ENCODE measurements at regions of chr3 and their contacts with region 1.

Region 1: DNA sequence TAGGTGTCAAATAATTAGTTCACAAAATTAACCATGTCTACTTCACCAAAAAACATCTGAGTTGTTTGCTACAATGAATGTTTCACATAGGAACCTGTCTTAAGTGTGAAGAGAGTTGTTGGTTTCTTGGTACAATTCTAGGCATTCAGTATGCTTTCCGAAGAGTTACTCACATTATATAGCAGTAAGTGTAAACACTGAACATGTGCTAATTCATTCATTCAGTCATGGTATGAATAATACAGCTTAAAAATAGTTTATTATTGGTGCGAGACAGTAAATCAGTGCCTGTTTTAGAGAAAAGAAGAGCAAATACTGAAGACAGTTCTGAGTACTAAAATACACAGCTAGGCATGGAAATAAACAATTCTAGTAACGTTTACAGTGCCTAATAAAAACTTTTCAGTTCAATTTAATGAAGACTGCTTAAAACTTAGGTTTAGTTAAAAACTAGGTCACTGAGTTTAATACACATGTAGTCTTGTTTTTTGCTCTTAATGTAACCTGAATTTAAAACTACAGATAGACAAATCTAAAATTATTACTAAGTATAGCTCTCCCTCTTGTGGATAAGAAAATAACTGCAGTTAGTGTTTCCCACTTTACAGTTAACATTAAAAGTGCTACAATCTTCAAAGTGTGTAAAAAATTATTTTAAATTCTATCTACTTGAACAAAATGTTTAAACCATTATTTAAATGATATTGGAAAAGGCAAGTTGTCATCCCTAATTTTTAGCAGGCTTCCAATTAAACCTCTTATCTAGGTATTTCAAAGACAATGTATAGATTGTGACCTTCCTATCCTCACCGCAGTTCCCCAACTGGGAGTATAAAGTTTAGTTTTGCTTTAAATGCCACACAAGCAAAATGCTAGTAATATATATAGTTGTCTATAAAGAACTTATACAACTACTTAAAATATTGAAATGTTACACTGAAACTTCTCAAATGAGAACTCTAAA is 20.1 kb upstream of the ZCWPW2 start:
- DNase-seq: no peak
- ATAC-seq: peak; percentile 42; the same call in 1 of the 3 replicates
- H3K4me3 ChIP-seq: no peak overlapping the region
- H3K27ac ChIP-seq: no peak overlapping the region
- H3K4me1 ChIP-seq: peaks cover 30% of the 10 kb centered on the region
- H3K27me3 ChIP-seq: no peaks in the 10 kb centered on the region
- CTCF ChIP-seq: peak; percentile 48
- EP300 ChIP-seq: no peak
- POLR2A ChIP-seq: no peak
- RAD21 ChIP-seq: 0 out of 2 replicates have a peak, but pooled peaks have one; percentile 14

Region 2: DNA sequence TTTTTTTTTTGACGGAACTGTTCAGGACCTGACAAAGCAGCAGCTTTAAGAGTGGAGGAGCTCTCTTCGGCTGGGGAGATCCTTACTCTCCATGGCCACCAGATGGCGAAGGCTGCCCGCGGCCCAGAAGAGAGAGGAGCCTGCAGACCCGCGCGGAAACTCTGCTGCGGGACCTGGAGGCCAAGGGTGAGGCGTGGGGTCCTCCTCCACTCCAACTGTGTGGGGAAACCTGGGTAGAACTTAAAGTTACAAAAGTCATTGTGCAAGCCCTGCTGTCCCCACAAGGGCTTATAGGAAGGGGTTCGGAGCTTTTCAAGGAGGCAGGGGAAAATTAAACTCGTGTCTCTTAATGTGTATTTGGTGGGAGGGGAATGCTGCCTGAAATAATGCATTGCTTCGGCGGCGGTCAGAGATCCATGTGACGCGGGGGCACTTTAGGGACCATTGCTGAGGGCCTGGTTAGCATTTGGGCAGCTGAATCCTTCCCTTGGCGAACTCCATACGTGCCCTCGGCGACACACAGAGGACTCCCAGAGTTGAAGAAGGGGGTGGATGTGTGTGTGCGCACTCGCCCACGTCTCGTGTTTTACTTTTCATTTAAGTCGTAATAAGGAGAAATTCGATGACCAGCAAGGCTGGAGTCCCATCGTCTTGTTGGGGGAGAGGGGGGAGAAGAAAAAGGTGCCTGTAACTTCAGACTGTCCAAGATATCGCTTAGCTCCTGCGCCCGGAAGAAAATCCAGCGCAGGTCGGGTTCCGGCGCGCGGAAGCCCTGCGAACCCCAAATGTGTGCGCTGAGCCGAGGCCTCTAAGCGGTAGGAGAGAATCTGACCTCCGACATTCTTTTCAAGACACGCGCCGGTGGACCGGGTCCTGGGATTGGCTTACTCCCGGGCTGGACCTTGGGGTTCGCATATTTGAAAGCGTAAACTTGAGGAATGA is 616.1 kb before region 1 on chr3:
- CTCF ChIA-PET with region 1: interaction called, 7 read pairs
- POLR2A ChIA-PET with region 1: interaction called, 3 read pairs
- in situ Hi-C with region 1: loop called (anchors 5 kb)
- intact Hi-C with region 1: loop called (anchors 1 kb)
- DNase-seq: peak; percentile 55
- ATAC-seq: peak; percentile 94
- H3K4me3 ChIP-seq: peak overlapping the region; percentile 42 to 71 (median 58); a peak in 5 of 6 replicates
- H3K27ac ChIP-seq: no peak overlapping the region
- H3K4me1 ChIP-seq: peaks cover 34% of the 10 kb centered on the region
- H3K27me3 ChIP-seq: peaks cover 12 to 51% of the 10 kb centered on the region in 2 experiments
- CTCF ChIP-seq: peak; percentile 86
- EP300 ChIP-seq: no peak
- POLR2A ChIP-seq: no peak
- RAD21 ChIP-seq: peak; percentile 59; the same call in 1 of the 2 replicates

Region 3: DNA sequence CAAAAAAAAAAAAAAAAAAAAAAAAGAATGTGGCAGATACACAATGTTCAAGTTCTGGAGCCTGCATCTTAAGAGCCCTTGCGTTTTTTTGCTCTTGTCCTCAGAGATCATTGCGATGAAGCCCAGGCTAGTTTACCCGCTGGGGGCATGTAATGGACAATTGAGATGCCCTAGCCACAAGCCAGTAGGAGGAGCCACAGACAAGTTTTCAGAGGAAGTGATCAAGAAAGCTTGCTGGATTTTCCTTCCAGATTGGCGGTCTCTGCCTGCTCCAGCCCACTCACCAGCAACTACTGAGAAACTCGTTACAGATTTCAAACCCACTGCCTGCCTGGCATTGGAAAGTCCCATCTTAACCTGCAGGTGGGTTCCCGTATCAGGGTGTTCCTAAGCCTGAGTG is 414.3 kb before region 1 on chr3:
- CTCF ChIA-PET with region 1: no interaction called
- POLR2A ChIA-PET with region 1: no interaction called
- in situ Hi-C with region 1: no loop called
- intact Hi-C with region 1: loop called (anchors 10 kb)
- DNase-seq: peak; percentile 3
- ATAC-seq: peak; percentile 75
- H3K4me3 ChIP-seq: no peak overlapping the region
- H3K27ac ChIP-seq: no peak overlapping the region
- H3K4me1 ChIP-seq: no peaks in the 10 kb centered on the region
- H3K27me3 ChIP-seq: no peaks in the 10 kb centered on the region
- CTCF ChIP-seq: peak; percentile 51
- EP300 ChIP-seq: no peak
- POLR2A ChIP-seq: no peak
- RAD21 ChIP-seq: no peak

Region 4: GRCh38 chr3:27943106-27943505 is 385.4 kb before region 1 on chr3:
- CTCF ChIA-PET with region 1: no interaction called
- POLR2A ChIA-PET with region 1: no interaction called
- in situ Hi-C with region 1: no loop called
- intact Hi-C with region 1: loop called (anchors 2 kb)
- DNase-seq: peak; percentile 16
- ATAC-seq: peak; percentile 83
- H3K4me3 ChIP-seq: no peak overlapping the region
- H3K27ac ChIP-seq: no peak overlapping the region
- H3K4me1 ChIP-seq: 0 out of 2 replicates have a peak, but pooled peaks cover 5% of the 10 kb centered on the region
- H3K27me3 ChIP-seq: no peaks in the 10 kb centered on the region; a peak in 1 of 5 replicates
- CTCF ChIP-seq: peak; percentile 45
- EP300 ChIP-seq: no peak
- POLR2A ChIP-seq: no peak
- RAD21 ChIP-seq: no peak

Region 5: DNA sequence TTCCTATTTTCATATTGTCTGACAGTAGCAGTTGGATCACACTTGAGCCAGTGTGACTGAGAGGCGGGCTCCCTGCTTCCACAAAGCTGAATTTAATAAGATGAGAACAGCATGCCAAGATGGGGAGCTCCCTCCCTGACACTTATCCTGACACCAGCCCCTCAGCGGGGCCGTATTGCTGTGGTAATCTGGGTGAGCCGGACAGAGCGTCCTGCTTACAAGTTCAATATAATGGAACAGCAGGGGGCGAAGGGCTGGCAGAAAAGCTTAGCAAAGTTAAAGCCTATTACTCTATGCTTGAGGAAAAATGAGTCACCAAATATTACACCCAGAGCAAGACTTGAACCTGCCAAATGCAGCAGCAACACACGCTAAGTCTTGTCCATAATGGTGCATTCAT is 250.9 kb before region 1 on chr3:
- CTCF ChIA-PET with region 1: interaction called, 4 read pairs
- POLR2A ChIA-PET with region 1: no interaction called
- in situ Hi-C with region 1: no loop called
- intact Hi-C with region 1: loop called (anchors 10 kb)
- DNase-seq: peak; percentile 25
- ATAC-seq: peak; percentile 86
- H3K4me3 ChIP-seq: no peak overlapping the region
- H3K27ac ChIP-seq: no peak overlapping the region
- H3K4me1 ChIP-seq: no peaks in the 10 kb centered on the region
- H3K27me3 ChIP-seq: no peaks in the 10 kb centered on the region
- CTCF ChIP-seq: peak; percentile 38
- EP300 ChIP-seq: no peak
- POLR2A ChIP-seq: no peak
- RAD21 ChIP-seq: no peak

Region 6: GRCh38 chr3:28308196-28308595 is 20.3 kb before region 1 on chr3:
- CTCF ChIA-PET with region 1: no interaction called
- POLR2A ChIA-PET with region 1: no interaction called
- in situ Hi-C with region 1: no loop called
- intact Hi-C with region 1: loop called (anchors 1 kb)
- DNase-seq: no peak
- ATAC-seq: no peak
- H3K4me3 ChIP-seq: no peak overlapping the region
- H3K27ac ChIP-seq: no peak overlapping the region
- H3K4me1 ChIP-seq: no peaks in the 10 kb centered on the region
- H3K27me3 ChIP-seq: no peaks in the 10 kb centered on the region; a peak in 1 of 5 replicates
- CTCF ChIP-seq: no peak
- EP300 ChIP-seq: no peak
- POLR2A ChIP-seq: no peak
- RAD21 ChIP-seq: no peak

Region 7: DNA sequence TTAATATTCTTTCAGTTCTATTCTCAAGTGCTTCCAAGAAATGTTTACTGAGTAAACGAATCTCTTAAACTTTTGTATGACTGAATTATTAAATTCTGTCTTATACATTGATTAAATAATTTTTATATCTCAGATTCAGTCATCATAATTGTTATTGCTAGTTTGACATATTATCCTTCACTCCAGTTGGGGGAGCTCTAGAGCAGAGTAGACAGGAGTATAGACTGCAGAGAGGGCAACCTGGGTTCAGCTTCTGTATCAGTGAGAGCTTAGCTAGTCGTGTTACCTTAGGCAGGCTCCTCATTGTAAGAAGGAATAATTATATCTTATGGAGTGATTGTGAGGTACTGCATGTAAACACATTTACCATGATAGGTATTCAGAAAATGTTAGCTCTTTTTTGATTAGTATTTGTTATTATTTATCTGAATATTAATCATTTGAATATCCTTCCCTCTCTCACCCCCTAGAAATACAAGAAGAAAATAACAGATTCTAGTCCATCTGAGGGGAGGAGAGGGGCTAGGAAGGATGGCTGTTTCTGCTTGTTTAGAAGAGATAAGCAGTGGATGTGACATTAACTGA is 10.9 kb before region 1 on chr3:
- CTCF ChIA-PET with region 1: interaction called, 7 read pairs
- POLR2A ChIA-PET with region 1: no interaction called
- in situ Hi-C with region 1: no loop called
- intact Hi-C with region 1: loop called (anchors 1 kb)
- DNase-seq: peak; percentile 57
- ATAC-seq: peak; percentile 84
- H3K4me3 ChIP-seq: no peak overlapping the region
- H3K27ac ChIP-seq: no peak overlapping the region
- H3K4me1 ChIP-seq: peaks cover 33% of the 10 kb centered on the region
- H3K27me3 ChIP-seq: no peaks in the 10 kb centered on the region
- CTCF ChIP-seq: peak; percentile 66
- EP300 ChIP-seq: no peak
- POLR2A ChIP-seq: no peak
- RAD21 ChIP-seq: no peak

Measured in HepG2 (cell line).